Right ventricle myocardium superior (tissue), 1 donor: ENCODE measurements at regions of chr15 and their contacts with region 1.

Region 1: GRCh38 chr15:88834211-88834812 is 31.1 kb downstream of the ACAN start:
- DNase-seq: peak; percentile 70
- ATAC-seq: peak; percentile 74

Region 2: DNA sequence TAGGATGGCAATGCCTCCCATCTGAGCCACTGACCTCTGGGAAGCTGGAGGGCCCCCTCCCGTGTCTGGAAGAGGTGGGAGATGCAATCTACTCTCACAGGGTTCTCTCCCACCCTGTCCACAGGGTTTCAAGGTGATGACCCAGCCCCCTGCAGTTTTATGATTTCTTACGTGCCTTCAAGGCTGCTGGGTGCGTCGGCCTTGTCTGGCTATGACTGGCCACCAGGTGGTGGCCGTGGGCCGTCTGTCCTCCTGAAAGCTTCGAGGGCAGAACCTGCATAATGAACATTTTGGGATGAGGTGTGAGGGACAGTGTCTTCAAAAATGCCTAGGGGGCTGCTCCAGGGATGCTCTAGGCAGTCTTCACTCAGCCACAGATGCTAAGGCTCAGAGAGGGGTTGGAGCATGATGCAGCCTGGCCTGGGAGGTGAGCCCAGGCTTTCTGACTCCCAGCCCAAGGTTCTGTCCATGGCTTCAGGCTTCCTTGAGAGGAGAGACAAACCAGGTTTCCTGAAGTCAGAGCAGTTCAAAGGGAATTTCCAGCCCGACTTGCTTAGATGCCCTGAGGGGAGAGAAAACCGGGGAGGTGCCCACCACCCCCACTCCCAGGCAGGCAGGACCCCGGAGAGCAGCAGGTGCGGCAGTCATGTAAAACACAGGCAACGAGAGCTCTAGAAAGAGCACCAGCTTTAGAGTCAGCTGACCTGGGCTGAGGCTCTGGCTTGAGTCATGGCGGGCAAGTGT is 176.8 kb before region 1 on chr15:
- intact Hi-C with region 1: loop called (anchors 5 kb)
- DNase-seq: no peak
- ATAC-seq: peak; percentile 55

Region 3: GRCh38 chr15:88904624-88905327 is 70.5 kb after region 1 on chr15:
- intact Hi-C with region 1: no loop called
- DNase-seq: peak; percentile 90
- ATAC-seq: peak; percentile 84